CD8-positive, alpha-beta T cell (primary cell): ENCODE measurements at regions of chr1 and their contacts with region 1.

Region 1: GRCh38 chr1:116352349-116352813 is 20.7 kb upstream of the ATP1A1 start:
- DNase-seq: no peak
- ATAC-seq: no peak
- H3K4me3 ChIP-seq: no peak overlapping the region
- H3K4me3 Mint-ChIP-seq: no peak overlapping the region
- H3K27ac ChIP-seq: no peak overlapping the region
- H3K27ac Mint-ChIP-seq: no peak overlapping the region
- H3K4me1 ChIP-seq: peaks cover 19% of the 10 kb centered on the region
- H3K4me1 Mint-ChIP-seq: peaks cover 38% of the 10 kb centered on the region
- H3K27me3 ChIP-seq: peaks cover 0 to 3% of the 10 kb centered on the region in 2 experiments
- H3K27me3 Mint-ChIP-seq: no peaks in the 10 kb centered on the region
- CTCF ChIP-seq: no peak

Region 2: GRCh38 chr1:116365857-116366256 is 13.5 kb after region 1 on chr1:
- CTCF ChIA-PET with region 1: interaction called, 4 read pairs
- POLR2A ChIA-PET with region 1: interaction called, 7 read pairs
- intact Hi-C with region 1: loop called in 1 of 2 experiments (anchors 2 kb)
- DNase-seq: no peak
- ATAC-seq: no peak
- H3K4me3 ChIP-seq: no peak overlapping the region
- H3K4me3 Mint-ChIP-seq: no peak overlapping the region
- H3K27ac ChIP-seq: no peak overlapping the region
- H3K27ac Mint-ChIP-seq: no peak overlapping the region
- H3K4me1 ChIP-seq: no peaks in the 10 kb centered on the region
- H3K4me1 Mint-ChIP-seq: peaks cover 18% of the 10 kb centered on the region
- H3K27me3 ChIP-seq: no peaks in the 10 kb centered on the region
- H3K27me3 Mint-ChIP-seq: no peaks in the 10 kb centered on the region
- CTCF ChIP-seq: no peak

Region 3: GRCh38 chr1:117059678-117060440 is 707.5 kb after region 1 on chr1 and contains the start of gene TTF2:
- CTCF ChIA-PET with region 1: no interaction called
- POLR2A ChIA-PET with region 1: no interaction called
- intact Hi-C with region 1: no loop called
- DNase-seq: peak; percentile 88 to 99 (median 93)
- ATAC-seq: peak; percentile 87
- H3K4me3 ChIP-seq: peak within 1 kb of the TSS; percentile 75
- H3K4me3 Mint-ChIP-seq: no peak within 1 kb of the TSS
- H3K27ac ChIP-seq: peak within 1 kb of the TSS; percentile 70 to 92
- H3K27ac Mint-ChIP-seq: no peak within 1 kb of the TSS
- H3K4me1 ChIP-seq: peaks cover 22% of the 10 kb centered on the region
- H3K4me1 Mint-ChIP-seq: peaks cover 39% of the 10 kb centered on the region
- H3K27me3 ChIP-seq: no peaks in the 10 kb centered on the region
- H3K27me3 Mint-ChIP-seq: no peaks in the 10 kb centered on the region
- CTCF ChIP-seq: no peak
- total RNA-seq, gene TTF2: 31.5 to 33.2 TPM